IMR-90 (cell line): ENCODE measurements at regions of chr6 and their contacts with region 1.

Region 1: GRCh38 chr6:157667211-157668008 is 155.6 kb upstream of the SNX9 start:
- DNase-seq: peak; percentile 70
- ATAC-seq: peak; percentile 45
- H3K4me3 ChIP-seq: no peak overlapping the region
- H3K27ac ChIP-seq: no peak overlapping the region
- H3K4me1 ChIP-seq: peaks cover 10% of the 10 kb centered on the region; the same call in 1 of the 2 replicates
- H3K27me3 ChIP-seq: no peaks in the 10 kb centered on the region
- CTCF ChIP-seq: peak; percentile 84
- POLR2A ChIP-seq: no peak
- RAD21 ChIP-seq: peak; percentile 86

Region 2: DNA sequence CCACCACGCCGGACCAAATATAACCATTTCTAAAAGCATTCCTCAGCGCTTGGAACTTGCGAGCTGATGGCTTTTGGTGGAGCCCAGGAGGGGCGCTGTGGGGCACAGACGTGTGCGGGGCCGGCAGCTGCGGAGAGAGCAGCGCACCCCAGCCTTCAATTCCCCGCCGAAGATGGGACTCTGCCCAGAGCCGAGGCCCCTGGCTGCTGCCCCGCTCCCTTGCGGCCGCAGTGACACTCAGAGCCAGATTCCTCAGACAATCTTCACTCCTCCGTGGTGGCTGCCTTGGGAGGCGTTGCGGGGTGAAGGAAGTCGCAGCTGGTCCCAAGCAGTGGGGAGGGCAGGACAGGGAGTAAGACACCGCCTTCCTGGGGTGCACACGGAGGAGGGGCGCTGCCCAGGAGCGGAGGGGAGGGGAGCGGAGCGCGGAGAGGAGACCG is 431.8 kb before region 1 on chr6:
- CTCF ChIA-PET with region 1: no interaction called
- POLR2A ChIA-PET with region 1: no interaction called
- dilution Hi-C with region 1: no loop called
- in situ Hi-C with region 1: no loop called
- intact Hi-C with region 1: no loop called
- DNase-seq: peak; percentile 33
- ATAC-seq: peak; percentile 87
- H3K4me3 ChIP-seq: peak overlapping the region; percentile 40
- H3K27ac ChIP-seq: no peak overlapping the region
- H3K4me1 ChIP-seq: peaks cover 3% of the 10 kb centered on the region
- H3K27me3 ChIP-seq: peaks cover 44% of the 10 kb centered on the region
- CTCF ChIP-seq: peak; percentile 58
- POLR2A ChIP-seq: no peak
- RAD21 ChIP-seq: peak; percentile 34; the same call in 1 of the 2 replicates

Region 3: DNA sequence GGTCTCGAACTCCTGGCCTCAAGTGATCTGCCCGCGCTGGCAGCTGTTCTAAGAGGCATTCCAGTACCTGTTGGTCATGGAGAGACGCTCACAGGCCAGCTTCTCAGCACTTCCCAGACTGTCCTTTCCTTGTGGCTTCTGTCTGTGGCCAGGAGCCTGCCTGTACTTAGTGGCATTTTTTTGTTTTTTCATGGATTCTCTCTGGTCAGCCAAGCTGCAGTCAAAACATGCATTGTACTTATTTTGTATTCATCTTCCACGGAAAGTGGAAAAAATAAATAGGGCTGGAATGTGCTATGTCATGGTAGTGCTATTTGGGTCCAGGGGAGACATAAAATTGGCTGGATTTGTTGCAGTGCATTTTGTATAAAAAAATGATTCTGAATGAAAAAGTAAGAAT is 257.4 kb before region 1 on chr6:
- CTCF ChIA-PET with region 1: no interaction called
- POLR2A ChIA-PET with region 1: no interaction called
- dilution Hi-C with region 1: no loop called
- in situ Hi-C with region 1: no loop called
- intact Hi-C with region 1: no loop called
- DNase-seq: peak; percentile 13
- ATAC-seq: peak; percentile 44; the same call in 1 of the 2 replicates
- H3K4me3 ChIP-seq: no peak overlapping the region
- H3K27ac ChIP-seq: no peak overlapping the region
- H3K4me1 ChIP-seq: no peaks in the 10 kb centered on the region
- H3K27me3 ChIP-seq: no peaks in the 10 kb centered on the region
- CTCF ChIP-seq: no peak
- POLR2A ChIP-seq: no peak
- RAD21 ChIP-seq: no peak

Region 4: DNA sequence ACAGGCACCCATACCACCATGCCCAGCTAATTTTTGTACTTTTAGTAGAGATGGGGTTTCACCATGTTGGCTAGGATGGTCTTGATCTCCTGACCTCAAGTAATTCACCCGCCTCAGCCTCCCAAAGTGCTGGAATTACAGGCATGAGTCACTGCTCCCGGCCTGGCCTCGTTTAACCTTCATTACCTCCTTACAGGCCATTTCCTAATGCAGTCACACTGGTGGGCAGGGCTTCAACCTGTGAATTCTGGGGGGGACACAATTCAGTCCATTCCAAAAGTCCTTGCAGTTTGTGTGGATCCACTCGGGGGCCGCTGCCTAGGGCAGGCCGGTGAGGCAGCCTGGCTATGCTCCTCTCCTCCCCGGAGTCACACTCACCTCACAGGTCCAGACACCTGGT is 43.2 kb after region 1 on chr6:
- CTCF ChIA-PET with region 1: no interaction called
- POLR2A ChIA-PET with region 1: no interaction called
- dilution Hi-C with region 1: no loop called
- in situ Hi-C with region 1: no loop called
- intact Hi-C with region 1: no loop called
- DNase-seq: no peak
- ATAC-seq: no peak
- H3K4me3 ChIP-seq: no peak overlapping the region
- H3K27ac ChIP-seq: no peak overlapping the region
- H3K4me1 ChIP-seq: peaks cover 16% of the 10 kb centered on the region
- H3K27me3 ChIP-seq: peaks cover 2% of the 10 kb centered on the region; the same call in 1 of the 2 replicates
- CTCF ChIP-seq: no peak
- POLR2A ChIP-seq: no peak
- RAD21 ChIP-seq: no peak

Region 5: DNA sequence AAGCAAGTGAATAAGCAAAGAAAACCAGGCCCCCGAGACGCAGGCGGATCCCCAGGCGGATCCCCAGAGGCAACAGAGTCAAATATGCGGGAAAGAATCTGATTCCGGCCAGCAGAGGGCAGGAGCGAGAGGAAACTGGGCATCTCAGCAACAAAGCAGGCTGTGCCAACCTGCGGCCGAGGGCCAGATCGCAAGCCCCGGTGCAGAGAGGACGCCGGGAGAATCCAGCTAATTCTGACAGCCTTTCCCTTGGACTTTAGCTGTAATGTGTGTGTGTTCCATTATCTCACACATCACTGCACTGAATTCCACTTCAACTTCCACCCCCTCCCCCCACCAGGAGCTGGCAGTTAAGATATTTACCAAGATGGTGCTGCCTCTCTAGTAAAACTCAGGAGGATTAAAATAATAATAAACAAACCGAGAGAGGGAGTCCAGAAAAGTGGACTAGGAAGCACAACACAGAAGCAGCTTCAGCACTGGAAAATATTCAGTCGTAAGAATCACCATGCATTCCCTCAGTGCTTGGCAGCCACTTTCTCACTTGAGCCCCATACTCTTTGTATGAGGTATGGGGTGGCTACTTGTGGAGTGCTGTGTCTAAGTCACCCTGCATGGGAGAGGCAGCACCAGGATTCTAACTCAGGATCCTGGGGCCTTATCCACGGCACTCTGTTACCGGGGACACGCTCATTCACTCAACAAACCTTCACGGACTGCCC is 89.5 kb after region 1 on chr6:
- CTCF ChIA-PET with region 1: interaction called, 3 read pairs
- POLR2A ChIA-PET with region 1: no interaction called
- dilution Hi-C with region 1: no loop called
- in situ Hi-C with region 1: no loop called
- intact Hi-C with region 1: loop called (anchors 10 kb)
- DNase-seq: peak; percentile 73
- ATAC-seq: peak; percentile 83
- H3K4me3 ChIP-seq: no peak overlapping the region
- H3K27ac ChIP-seq: peak overlapping the region; percentile 40; the same call in 1 of the 2 replicates
- H3K4me1 ChIP-seq: peaks cover 18% of the 10 kb centered on the region
- H3K27me3 ChIP-seq: no peaks in the 10 kb centered on the region; the same call in 1 of the 2 replicates
- CTCF ChIP-seq: peak; percentile 92
- POLR2A ChIP-seq: no peak
- RAD21 ChIP-seq: peak; percentile 92